ENCODE measurements at regions of chr5 and their contacts with region 1.

Region 1: GRCh38 chr5:82259172-82259800 is 18.9 kb downstream of the RPS23 start:
- DNase-seq: no peak
- H3K4me3 ChIP-seq: no peak overlapping the region
- H3K27ac ChIP-seq: no peak overlapping the region
- H3K4me1 ChIP-seq: peaks cover 0 to 12% (median 6%) of the 10 kb centered on the region in 4 experiments; a peak in 6 of 7 replicates
- H3K27me3 ChIP-seq: no peaks in the 10 kb centered on the region
- CTCF ChIP-seq: peak in 2 of 3 experiments; percentile 40 to 42; a peak in 2 of 4 replicates
- EP300 ChIP-seq: no peak
- POLR2A ChIP-seq: no peak
- RAD21 ChIP-seq: peak; percentile 52 to 56

Region 2: DNA sequence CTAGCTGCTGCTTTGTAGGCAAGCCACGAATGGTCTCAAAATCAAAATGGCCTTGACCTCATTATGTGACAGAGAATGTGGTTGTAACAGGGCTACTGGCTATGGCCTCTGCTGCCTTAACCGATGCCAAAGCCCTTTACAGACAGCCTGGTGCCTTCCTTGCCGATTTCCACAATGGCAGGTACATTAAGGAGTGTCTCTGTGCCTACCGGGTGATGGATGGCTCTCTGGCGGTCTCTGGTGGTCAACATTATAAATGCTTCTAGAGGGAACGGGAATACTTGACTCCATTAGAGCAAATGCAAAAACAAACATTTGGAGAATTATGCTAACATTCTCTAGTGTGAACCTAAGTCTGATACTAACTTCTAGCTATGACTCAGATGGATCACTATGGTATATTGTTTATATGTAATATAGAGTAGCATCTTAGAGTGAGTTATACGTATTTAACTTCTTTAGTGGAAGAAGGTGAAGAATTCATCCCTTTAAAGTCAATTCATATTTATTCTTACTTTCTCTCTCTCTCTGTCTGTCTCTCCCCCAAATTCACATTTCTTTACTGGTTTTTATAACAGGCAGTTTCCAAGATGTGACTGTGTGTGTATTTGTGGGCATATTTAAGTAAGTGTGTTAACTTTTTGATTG is 33.6 kb before region 1 on chr5:
- CTCF ChIA-PET with region 1: interaction called, 22 read pairs
- POLR2A ChIA-PET with region 1: no interaction called
- DNase-seq: peak; percentile 33 to 85
- H3K4me3 ChIP-seq: no peak overlapping the region
- H3K27ac ChIP-seq: no peak overlapping the region
- H3K4me1 ChIP-seq: peaks cover 0 to 9% (median 0%) of the 10 kb centered on the region in 4 experiments; a peak in 3 of 7 replicates
- H3K27me3 ChIP-seq: no peaks in the 10 kb centered on the region
- CTCF ChIP-seq: peak; percentile 52 to 89 (median 87)
- EP300 ChIP-seq: no peak
- POLR2A ChIP-seq: no peak
- RAD21 ChIP-seq: peak; percentile 98 to 99

Region 3: GRCh38 chr5:82246960-82247574 is 12.2 kb before region 1 on chr5:
- CTCF ChIA-PET with region 1: interaction called, 20 read pairs
- POLR2A ChIA-PET with region 1: interaction called, 6 read pairs
- DNase-seq: no peak
- H3K4me3 ChIP-seq: no peak overlapping the region
- H3K27ac ChIP-seq: no peak overlapping the region
- H3K4me1 ChIP-seq: no peaks in the 10 kb centered on the region
- H3K27me3 ChIP-seq: no peaks in the 10 kb centered on the region
- CTCF ChIP-seq: no peak
- EP300 ChIP-seq: no peak
- POLR2A ChIP-seq: no peak
- RAD21 ChIP-seq: no peak

Region 4: DNA sequence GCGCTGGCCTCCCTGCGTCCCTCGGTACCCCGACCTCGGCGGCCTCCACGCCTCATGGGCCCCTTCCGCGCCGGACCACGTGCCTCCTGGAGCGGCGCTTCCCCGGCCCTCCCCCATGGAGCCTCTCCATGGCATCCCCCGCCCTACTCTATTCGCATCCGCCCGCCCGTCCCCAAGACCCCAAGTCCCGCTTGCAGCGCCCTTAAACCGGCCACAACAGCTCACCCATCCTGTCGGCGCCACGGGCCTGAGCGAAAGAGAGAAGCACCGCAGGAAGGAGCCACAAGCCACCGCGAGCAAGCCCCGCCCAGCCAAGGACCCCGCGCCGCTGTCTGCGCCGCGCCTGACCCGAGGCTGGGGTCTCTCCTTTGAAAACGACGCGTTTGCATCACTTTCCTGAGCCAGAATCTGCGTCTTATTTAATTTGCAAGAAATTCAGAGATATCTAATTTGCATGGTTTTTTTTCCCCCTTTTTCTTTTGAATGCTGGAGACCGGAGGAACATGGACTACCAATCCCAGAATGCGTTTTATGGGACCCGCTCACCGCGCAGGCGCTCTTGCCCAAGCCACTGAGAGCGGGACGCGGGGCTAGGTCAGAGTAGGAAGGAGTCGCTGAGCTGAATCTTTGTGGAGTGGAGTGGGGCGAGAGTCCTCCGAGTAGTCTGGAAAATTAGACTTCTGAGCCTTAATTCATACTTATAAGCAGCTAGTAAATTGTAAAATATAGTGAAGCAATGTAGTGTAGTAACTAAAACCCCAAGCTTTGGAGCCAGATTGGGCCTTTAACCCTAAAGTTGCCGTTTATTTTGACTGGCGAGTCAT is 19.0 kb after region 1 on chr5 and contains the start of gene RPS23:
- CTCF ChIA-PET with region 1: interaction called, 14 read pairs
- POLR2A ChIA-PET with region 1: interaction called, 42 read pairs
- DNase-seq: peak in 1 of 2 experiments; percentile 89
- H3K4me3 ChIP-seq: peak within 1 kb of the TSS; percentile 98 to 100 (median 99)
- H3K27ac ChIP-seq: peak within 1 kb of the TSS; percentile 92
- H3K4me1 ChIP-seq: peaks cover 3 to 7% (median 6%) of the 10 kb centered on the region in 4 experiments; a peak in 6 of 7 replicates
- H3K27me3 ChIP-seq: no peaks in the 10 kb centered on the region
- CTCF ChIP-seq: no peak
- EP300 ChIP-seq: no peak
- POLR2A ChIP-seq: peak; percentile 89 to 95; a peak in 2 of 3 replicates
- RAD21 ChIP-seq: no peak
- total RNA-seq, gene RPS23: 2,559 and 2,561 TPM in 2 replicates

Region 5: GRCh38 chr5:82287625-82288024 is 28.3 kb after region 1 on chr5:
- CTCF ChIA-PET with region 1: interaction called, 11 read pairs
- POLR2A ChIA-PET with region 1: no interaction called
- DNase-seq: no peak
- H3K4me3 ChIP-seq: no peak overlapping the region
- H3K27ac ChIP-seq: no peak overlapping the region
- H3K4me1 ChIP-seq: peaks cover 4 to 9% (median 5%) of the 10 kb centered on the region in 4 experiments; a peak in 6 of 7 replicates
- H3K27me3 ChIP-seq: peaks cover 0 to 2% (median 0%) of the 10 kb centered on the region in 4 experiments; a peak in 4 of 7 replicates
- CTCF ChIP-seq: no peak
- EP300 ChIP-seq: no peak
- POLR2A ChIP-seq: no peak
- RAD21 ChIP-seq: no peak

Region 6: DNA sequence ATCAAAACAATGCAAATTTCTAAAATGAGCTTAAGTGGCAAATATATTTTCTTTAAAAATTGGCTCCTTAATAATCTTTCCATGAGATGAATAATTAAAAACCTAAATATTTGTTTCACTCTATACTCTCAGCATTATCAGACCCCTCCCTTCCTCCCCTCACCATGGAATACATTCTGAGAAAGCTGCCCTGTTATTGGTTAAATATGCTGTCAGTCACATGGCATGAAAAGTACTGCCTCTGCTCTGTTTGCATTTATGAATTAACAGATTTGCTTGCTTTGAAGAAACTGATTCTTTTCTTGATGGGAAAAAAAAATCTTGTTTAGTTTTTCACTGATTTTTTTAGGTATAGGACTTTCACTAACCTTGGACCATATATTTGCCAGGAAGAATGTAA is 35.9 kb after region 1 on chr5:
- CTCF ChIA-PET with region 1: interaction called, 11 read pairs
- POLR2A ChIA-PET with region 1: interaction called, 6 read pairs
- DNase-seq: no peak
- H3K4me3 ChIP-seq: no peak overlapping the region
- H3K27ac ChIP-seq: no peak overlapping the region
- H3K4me1 ChIP-seq: peaks cover 8 to 18% (median 10%) of the 10 kb centered on the region in 4 experiments; a peak in 6 of 7 replicates
- H3K27me3 ChIP-seq: peaks cover 0 to 1% (median 0%) of the 10 kb centered on the region in 4 experiments; a peak in 4 of 7 replicates
- CTCF ChIP-seq: no peak
- EP300 ChIP-seq: no peak
- POLR2A ChIP-seq: no peak
- RAD21 ChIP-seq: no peak

Region 7: DNA sequence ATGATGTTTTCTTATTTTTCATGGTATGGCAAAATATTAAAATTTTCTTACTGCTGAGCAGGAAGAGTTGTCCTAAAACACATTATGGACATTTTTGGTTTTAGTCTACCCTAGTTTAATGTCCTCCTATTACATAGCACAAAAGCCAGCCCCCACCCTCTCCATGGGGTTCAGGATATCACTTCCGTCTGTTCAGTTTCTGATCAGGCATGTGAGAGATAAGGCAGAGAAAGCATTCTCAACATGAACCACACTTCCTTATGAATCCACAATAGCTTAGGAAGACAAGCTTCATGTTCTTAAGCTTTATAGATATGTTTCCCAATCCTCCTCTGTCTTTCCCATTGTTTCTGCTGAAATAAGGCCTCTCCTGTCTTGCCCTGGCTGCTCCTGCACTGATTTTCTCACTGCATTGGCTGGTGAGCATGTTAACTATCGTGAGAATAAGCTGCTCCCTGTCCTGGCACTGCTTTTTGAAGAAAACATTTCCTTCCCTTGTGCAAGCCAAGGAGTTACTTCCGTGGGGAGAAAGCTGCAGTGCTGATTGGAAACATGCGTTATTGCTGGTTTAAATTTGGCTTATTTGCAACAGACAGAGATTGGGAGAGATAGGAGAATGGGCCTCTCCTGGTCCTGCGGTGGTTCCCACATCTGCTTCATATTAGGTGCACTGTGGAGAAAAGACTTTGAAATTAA is 279.2 kb after region 1 on chr5:
- CTCF ChIA-PET with region 1: no interaction called
- POLR2A ChIA-PET with region 1: no interaction called
- DNase-seq: no peak
- H3K4me3 ChIP-seq: no peak overlapping the region
- H3K27ac ChIP-seq: no peak overlapping the region
- H3K4me1 ChIP-seq: no peaks in the 10 kb centered on the region
- H3K27me3 ChIP-seq: no peaks in the 10 kb centered on the region
- CTCF ChIP-seq: no peak
- EP300 ChIP-seq: no peak
- POLR2A ChIP-seq: no peak
- RAD21 ChIP-seq: no peak

Measured in H1 (cell line).